ENCODE measurements at regions of chr1 and their contacts with region 1.

Region 1: DNA sequence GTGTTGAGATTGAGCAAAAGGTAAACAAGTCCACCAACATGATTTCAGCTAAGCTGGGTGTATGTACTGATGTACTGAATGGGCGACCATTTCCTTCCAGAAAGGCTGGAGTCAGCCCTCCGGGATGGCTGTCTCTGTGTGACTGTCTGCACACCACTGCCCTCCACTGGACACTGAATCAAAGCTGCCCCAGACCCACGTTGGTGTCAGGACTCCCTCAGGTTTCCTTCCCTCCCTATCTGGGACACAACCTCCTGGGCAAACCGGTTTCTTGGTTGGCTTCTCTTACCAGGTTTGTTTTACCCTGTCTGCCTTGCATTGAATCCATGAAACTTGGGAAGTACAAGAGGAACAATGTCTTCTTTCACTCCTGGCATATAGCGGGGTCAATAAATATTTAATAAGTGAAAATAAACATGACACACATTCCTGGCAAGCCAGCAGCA is 5.3 kb upstream of the SRP9 start:
- DNase-seq: peak; percentile 90

Region 2: GRCh38 chr1:225652729-225653462 is 119.5 kb before region 1 on chr1 and contains the start of gene ENAH:
- intact Hi-C with region 1: loop called (anchors 2 to 10 kb)
- DNase-seq: peak; percentile 92
- total RNA-seq, gene ENAH: 165 to 244 TPM

Region 3: DNA sequence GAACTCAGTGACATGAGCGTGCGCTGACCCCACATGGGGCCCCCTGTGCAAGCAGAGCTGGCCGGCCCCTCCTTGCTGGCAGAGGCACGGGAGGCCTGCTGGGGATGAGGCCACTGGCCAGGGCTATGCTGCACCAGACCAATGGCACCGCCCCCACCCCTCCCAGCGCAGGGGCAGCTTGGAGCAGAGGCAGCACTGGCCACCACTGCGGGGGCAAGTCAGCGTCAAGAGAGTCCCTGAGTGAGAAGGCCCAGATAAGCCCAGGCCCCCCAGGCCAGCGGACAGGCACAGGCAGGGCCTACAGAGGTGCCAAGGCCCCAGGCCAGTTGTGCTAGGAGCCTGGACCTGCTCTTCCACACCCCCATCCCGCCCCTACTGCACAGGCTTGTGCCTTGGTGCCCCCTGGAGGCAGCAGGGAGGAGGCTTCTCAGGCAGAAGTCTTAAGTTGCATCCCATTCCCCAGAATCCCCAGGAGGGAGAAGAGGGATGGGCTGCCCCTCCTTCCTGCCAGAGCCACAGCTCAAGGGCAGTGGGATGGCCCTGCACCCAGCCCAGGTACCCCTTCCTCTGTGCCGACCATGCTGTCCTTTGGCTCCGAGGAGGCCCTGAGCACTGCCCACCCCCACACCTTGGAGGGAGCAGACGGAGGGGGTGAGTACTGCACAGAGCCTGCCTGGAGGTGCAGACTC is 73.4 kb after region 1 on chr1:
- intact Hi-C with region 1: loop called in 1 of 2 experiments (anchors 5 kb)
- DNase-seq: peak; percentile 94

Region 4: GRCh38 chr1:225919906-225920305 is 147.6 kb after region 1 on chr1:
- intact Hi-C with region 1: loop called (anchors 5 to 10 kb)
- DNase-seq: peak; percentile 89

Measured in posterior vena cava (tissue), 2 donors.